Panc1 (cell line): ENCODE measurements at regions of chr6 and their contacts with region 1.

Region 1: GRCh38 chr6:155237613-155238012 is 26.2 kb upstream of the CLDN20 start:
- DNase-seq: no peak
- ATAC-seq: no peak
- H3K4me3 ChIP-seq: no peak overlapping the region
- H3K27ac ChIP-seq: no peak overlapping the region; the same call in 1 of the 2 replicates
- H3K4me1 ChIP-seq: no peaks in the 10 kb centered on the region
- H3K27me3 ChIP-seq: no peaks in the 10 kb centered on the region
- CTCF ChIP-seq: no peak

Region 2: GRCh38 chr6:154675602-154676088 is 562.0 kb before region 1 on chr6:
- CTCF ChIA-PET with region 1: no interaction called
- POLR2A ChIA-PET with region 1: no interaction called
- in situ Hi-C with region 1: no loop called
- intact Hi-C with region 1: no loop called
- DNase-seq: peak; percentile 98
- ATAC-seq: peak; percentile 99
- H3K4me3 ChIP-seq: no peak overlapping the region
- H3K27ac ChIP-seq: no peak overlapping the region
- H3K4me1 ChIP-seq: no peaks in the 10 kb centered on the region
- H3K27me3 ChIP-seq: no peaks in the 10 kb centered on the region
- CTCF ChIP-seq: peak; percentile 99

Region 3: GRCh38 chr6:155010940-155011339 is 226.7 kb before region 1 on chr6:
- CTCF ChIA-PET with region 1: no interaction called
- POLR2A ChIA-PET with region 1: interaction called, 10 read pairs
- in situ Hi-C with region 1: no loop called
- intact Hi-C with region 1: no loop called
- DNase-seq: no peak
- ATAC-seq: no peak
- H3K4me3 ChIP-seq: peak overlapping the region in 1 of 2 experiments; percentile 39; a peak in 3 of 4 replicates
- H3K27ac ChIP-seq: peak overlapping the region; percentile 72
- H3K4me1 ChIP-seq: peaks cover 46% of the 10 kb centered on the region
- H3K27me3 ChIP-seq: no peaks in the 10 kb centered on the region
- CTCF ChIP-seq: no peak

Region 4: DNA sequence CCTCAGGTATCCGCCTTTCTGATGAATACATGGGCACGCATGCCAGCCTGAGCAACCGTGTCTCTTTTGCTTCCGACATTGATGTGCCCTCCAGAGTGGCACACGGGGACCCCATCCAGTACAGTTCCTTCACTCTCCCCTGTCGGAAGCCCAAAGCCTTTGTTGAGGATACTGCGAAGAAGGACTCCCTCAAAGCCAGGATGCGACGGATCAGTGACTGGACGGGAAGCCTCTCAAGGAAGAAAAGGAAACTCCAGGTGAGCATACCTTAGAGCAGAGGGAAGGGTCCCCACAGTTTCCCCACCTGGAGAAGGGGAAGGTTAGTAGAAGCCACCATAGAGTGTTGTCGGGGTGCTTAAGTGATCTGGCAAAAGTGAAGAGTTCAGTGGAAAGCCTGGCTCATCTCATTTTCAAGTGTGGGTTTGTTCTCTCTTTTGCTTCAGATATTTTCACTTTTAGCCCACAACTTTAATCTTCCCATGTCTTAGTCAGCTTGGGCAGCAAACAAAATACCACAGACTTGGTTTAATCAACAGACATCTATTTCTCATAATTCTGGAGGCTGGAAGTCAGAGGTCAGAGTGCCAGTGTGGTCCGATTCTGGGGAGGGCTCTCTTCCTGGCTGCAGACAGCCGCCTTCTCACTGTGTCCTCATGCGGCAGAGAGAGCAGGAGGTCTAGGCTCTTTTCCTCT is 107.3 kb before region 1 on chr6:
- CTCF ChIA-PET with region 1: no interaction called
- POLR2A ChIA-PET with region 1: no interaction called
- in situ Hi-C with region 1: no loop called
- intact Hi-C with region 1: no loop called
- DNase-seq: no peak
- ATAC-seq: no peak
- H3K4me3 ChIP-seq: no peak overlapping the region
- H3K27ac ChIP-seq: 0 out of 2 replicates have a peak overlapping the region, but pooled peaks have one; percentile 13
- H3K4me1 ChIP-seq: peaks cover 29% of the 10 kb centered on the region
- H3K27me3 ChIP-seq: no peaks in the 10 kb centered on the region
- CTCF ChIP-seq: no peak